Thyroid gland (tissue), 4 donors: ENCODE measurements at regions of chr17 and their contacts with region 1.

Region 1: GRCh38 chr17:58417300-58418092 is at the start of gene RNF43:
- DNase-seq: peak; percentile 99
- H3K4me3 ChIP-seq: peak within 1 kb of the TSS in 2 of 3 donors; percentile 30 to 37
- H3K27ac ChIP-seq: peak within 1 kb of the TSS; percentile 55 to 73 (median 66)
- H3K4me1 ChIP-seq: peaks cover 3 to 8% of the 10 kb centered on the region in 2 donors
- H3K27me3 ChIP-seq: no peaks in the 10 kb centered on the region
- CTCF ChIP-seq: peak; percentile 38 to 97 (median 87)
- POLR2A ChIP-seq: peak in 1 of 2 donors; percentile 92
- total RNA-seq, gene RNF43: 2.1 to 5.2 (median 4.3) TPM

Region 2: GRCh38 chr17:58352014-58352842 is 65.3 kb before region 1 on chr17 and contains the start of gene SUPT4H1:
- intact Hi-C with region 1: loop called (anchors 10 kb)
- DNase-seq: peak; percentile 91 to 92
- H3K4me3 ChIP-seq: peak within 1 kb of the TSS; percentile 19 to 98 (median 84)
- H3K27ac ChIP-seq: peak within 1 kb of the TSS; percentile 51 to 87 (median 78)
- H3K4me1 ChIP-seq: peaks cover 11 to 14% of the 10 kb centered on the region in 2 donors
- H3K27me3 ChIP-seq: no peaks in the 10 kb centered on the region
- CTCF ChIP-seq: peak in 1 of 6 experiments; percentile 26
- POLR2A ChIP-seq: peak; percentile 51 to 85
- total RNA-seq, gene SUPT4H1: 38.2 to 56.3 (median 44.2) TPM

Region 3: GRCh38 chr17:58813712-58814111 is 396.2 kb after region 1 on chr17:
- intact Hi-C with region 1: no loop called
- DNase-seq: no peak
- H3K4me3 ChIP-seq: no peak overlapping the region
- H3K27ac ChIP-seq: no peak overlapping the region
- H3K4me1 ChIP-seq: no peaks in the 10 kb centered on the region
- H3K27me3 ChIP-seq: no peaks in the 10 kb centered on the region
- CTCF ChIP-seq: no peak
- POLR2A ChIP-seq: no peak